SK-N-SH (cell line): ENCODE measurements at regions of chr1 and their contacts with region 1.

Region 1: GRCh38 chr1:27556781-27557595 is 47.0 kb downstream of the AHDC1 start:
- DNase-seq: peak; percentile 94
- H3K4me3 ChIP-seq: no peak overlapping the region
- H3K27ac ChIP-seq: peak overlapping the region; percentile 18 to 23; a peak in 3 of 4 replicates
- H3K4me1 ChIP-seq: peaks cover 29 to 36% of the 10 kb centered on the region in 2 experiments; a peak in 3 of 4 replicates
- H3K27me3 ChIP-seq: no peaks in the 10 kb centered on the region
- CTCF ChIP-seq: peak; percentile 78
- EP300 ChIP-seq: no peak
- RAD21 ChIP-seq: peak; percentile 87

Region 2: GRCh38 chr1:27365372-27366112 is 191.4 kb before region 1 on chr1:
- CTCF ChIA-PET with region 1: interaction called, 11 read pairs
- POLR2A ChIA-PET with region 1: no interaction called
- DNase-seq: peak; percentile 97
- H3K4me3 ChIP-seq: peak overlapping the region; percentile 69 to 89
- H3K27ac ChIP-seq: peak overlapping the region; percentile 84 to 94
- H3K4me1 ChIP-seq: peaks cover 4 to 14% of the 10 kb centered on the region in 2 experiments; a peak in 2 of 4 replicates
- H3K27me3 ChIP-seq: no peaks in the 10 kb centered on the region
- CTCF ChIP-seq: no peak
- EP300 ChIP-seq: peak in 1 of 2 experiments; percentile 66; a peak in 3 of 4 replicates
- RAD21 ChIP-seq: no peak

Region 3: GRCh38 chr1:27430903-27431600 is 125.9 kb before region 1 on chr1:
- CTCF ChIA-PET with region 1: interaction called, 19 read pairs
- POLR2A ChIA-PET with region 1: no interaction called
- DNase-seq: no peak
- H3K4me3 ChIP-seq: no peak overlapping the region
- H3K27ac ChIP-seq: no peak overlapping the region
- H3K4me1 ChIP-seq: peaks cover 1 to 15% of the 10 kb centered on the region in 2 experiments; a peak in 3 of 4 replicates
- H3K27me3 ChIP-seq: no peaks in the 10 kb centered on the region
- CTCF ChIP-seq: no peak
- EP300 ChIP-seq: no peak
- RAD21 ChIP-seq: 0 out of 2 replicates have a peak, but pooled peaks have one; percentile 13

Region 4: DNA sequence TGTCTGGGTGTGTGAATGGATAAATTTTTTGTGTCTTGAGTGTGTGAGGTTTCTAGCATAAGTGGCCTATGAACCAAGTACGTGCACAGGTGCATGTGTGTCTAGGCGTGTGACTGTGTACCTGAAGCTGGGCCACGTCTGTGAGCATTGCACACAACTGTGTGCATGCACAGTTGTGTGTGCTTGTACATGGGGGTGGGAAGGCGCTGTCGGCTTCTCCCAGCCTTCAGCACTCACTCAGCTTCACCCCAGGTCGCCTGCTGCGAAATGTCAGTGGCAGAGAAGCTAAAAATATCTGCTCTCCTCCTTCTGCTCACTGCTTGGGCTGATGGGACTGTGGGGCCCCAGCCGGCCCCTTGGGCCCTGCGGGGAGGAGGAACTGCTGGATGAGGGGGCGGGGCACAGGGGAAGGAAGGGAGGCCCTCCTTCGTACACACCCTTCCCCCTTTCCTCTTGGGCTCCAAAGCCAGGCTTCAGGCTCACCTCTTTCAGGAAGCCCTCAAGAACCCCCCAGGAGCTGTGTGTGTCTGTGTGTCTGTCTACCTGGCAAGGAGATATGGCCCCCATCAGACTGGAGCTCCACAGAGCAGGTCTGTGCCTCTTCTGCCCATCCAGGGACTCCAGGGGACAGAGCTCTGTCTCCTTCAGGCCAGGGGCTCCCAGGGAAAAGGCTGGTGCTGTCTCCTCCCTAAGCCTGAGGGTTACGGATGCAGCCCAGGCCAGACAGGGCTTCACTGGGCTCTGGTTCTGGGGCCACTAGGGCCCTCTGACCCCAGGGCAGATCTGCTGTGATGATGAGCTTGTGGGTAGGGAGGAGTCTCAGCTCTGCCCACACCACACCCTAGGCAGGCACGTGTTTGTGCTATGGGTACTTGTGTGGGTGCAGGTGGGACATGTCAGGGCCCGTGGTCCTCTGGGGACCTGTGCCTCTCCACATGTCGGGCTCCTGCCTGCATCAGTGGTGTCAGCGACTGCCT is 31.4 kb before region 1 on chr1:
- CTCF ChIA-PET with region 1: interaction called, 19 read pairs
- POLR2A ChIA-PET with region 1: no interaction called
- DNase-seq: no peak
- H3K4me3 ChIP-seq: no peak overlapping the region
- H3K27ac ChIP-seq: peak overlapping the region in 1 of 2 experiments; percentile 20; a peak in 1 of 4 replicates
- H3K4me1 ChIP-seq: peaks cover 3 to 72% of the 10 kb centered on the region in 2 experiments; a peak in 1 of 4 replicates
- H3K27me3 ChIP-seq: no peaks in the 10 kb centered on the region
- CTCF ChIP-seq: no peak
- EP300 ChIP-seq: no peak
- RAD21 ChIP-seq: no peak

Region 5: DNA sequence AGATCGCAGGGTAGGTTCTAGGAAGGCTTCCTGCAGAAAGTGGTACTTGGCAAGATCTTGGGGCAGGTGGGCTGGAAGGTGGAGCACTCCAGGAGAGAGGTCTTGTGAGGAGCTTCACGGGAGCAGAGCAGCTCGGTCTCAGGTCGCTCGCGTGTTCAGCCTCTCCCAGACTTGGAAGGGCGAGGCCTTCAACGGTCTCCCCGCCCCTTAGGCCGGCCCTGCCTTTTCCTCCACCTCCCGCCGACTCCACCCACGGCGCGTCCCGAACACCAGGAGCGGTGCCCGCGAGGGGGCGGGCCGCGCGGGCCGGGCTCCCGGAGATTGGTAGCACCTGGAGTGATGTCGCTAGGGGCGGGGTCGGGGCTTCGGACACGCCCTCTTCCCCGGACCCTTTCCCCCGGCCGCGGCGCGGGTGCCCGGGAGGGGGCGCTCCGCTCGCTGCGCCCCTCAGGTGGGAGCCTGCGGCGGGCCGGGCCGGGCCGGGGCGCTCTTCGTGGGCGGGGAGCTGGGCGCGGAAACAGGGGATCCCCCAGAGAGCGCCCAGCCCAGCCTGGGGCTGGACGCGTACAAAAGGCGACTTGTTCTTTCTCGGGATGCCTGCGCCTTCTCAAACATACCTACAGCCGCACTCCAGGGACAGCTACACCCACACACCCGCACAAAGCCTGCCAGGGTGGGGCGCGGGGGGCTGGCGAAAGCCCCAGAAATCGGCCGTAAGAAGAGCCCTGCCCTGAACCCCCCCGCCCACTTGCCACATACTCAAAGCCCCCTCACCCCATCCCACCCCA is 11.5 kb after region 1 on chr1:
- CTCF ChIA-PET with region 1: interaction called, 131 read pairs
- POLR2A ChIA-PET with region 1: no interaction called
- DNase-seq: peak; percentile 99
- H3K4me3 ChIP-seq: peak overlapping the region in 1 of 2 experiments; percentile 28; a peak in 2 of 4 replicates
- H3K27ac ChIP-seq: no peak overlapping the region
- H3K4me1 ChIP-seq: peaks cover 52 to 77% of the 10 kb centered on the region in 2 experiments; a peak in 3 of 4 replicates
- H3K27me3 ChIP-seq: no peaks in the 10 kb centered on the region
- CTCF ChIP-seq: peak; percentile 70
- EP300 ChIP-seq: no peak
- RAD21 ChIP-seq: peak; percentile 16; the same call in 1 of the 2 replicates

Region 6: GRCh38 chr1:27662707-27663393 is 105.9 kb after region 1 on chr1:
- CTCF ChIA-PET with region 1: interaction called, 17 read pairs
- POLR2A ChIA-PET with region 1: no interaction called
- DNase-seq: peak; percentile 86
- H3K4me3 ChIP-seq: no peak overlapping the region; a peak in 1 of 4 replicates
- H3K27ac ChIP-seq: peak overlapping the region in 1 of 2 experiments; percentile 2; a peak in 1 of 4 replicates
- H3K4me1 ChIP-seq: peaks cover 6 to 9% of the 10 kb centered on the region in 2 experiments; a peak in 2 of 4 replicates
- H3K27me3 ChIP-seq: no peaks in the 10 kb centered on the region
- CTCF ChIP-seq: peak; percentile 90
- EP300 ChIP-seq: no peak
- RAD21 ChIP-seq: peak; percentile 91